Gastrocnemius medialis (tissue), 4 donors: ENCODE measurements at regions of chr2 and their contacts with region 1.

Region 1: DNA sequence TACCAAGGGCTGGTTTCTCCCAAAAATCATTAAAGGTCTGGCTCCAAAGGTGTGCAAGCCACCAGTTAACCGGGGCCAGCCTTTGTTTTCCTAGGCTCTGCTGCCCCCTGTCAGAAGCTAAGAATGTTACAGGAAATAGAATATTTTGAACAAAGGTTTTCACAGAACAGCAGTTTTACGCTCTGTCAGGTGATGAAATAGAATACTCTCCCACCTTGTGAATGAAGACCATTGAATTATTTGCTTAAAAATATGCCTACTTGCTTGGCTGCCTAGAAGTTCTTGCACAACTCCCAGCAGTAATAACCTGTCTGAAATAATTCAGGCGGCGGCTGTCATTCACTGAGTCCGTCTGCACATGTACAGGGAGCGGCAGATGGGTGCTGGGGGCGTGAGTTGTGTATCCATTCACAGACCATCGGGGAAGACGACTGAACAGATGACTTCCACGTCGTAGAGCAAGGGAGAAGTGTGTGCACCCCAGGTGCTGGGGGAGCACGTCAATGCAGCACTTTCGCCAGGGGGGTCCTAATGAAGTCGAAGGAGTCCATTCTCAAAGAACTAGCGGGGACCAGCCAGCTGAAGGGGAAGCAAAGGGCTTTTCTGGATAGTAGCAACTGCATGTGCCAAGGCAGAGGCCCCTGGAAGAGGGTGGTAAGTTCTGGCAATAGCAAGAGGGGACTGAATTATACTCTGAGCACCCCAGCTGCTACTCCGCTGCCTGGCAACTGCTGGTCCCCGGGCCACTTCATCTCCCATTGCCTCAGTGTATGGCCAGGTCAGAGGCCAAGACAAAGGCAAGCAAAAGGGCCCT is 56.1 kb downstream of the SF3B1 start:
- DNase-seq: peak in 1 of 2 donors; percentile 8
- ATAC-seq: peak; percentile 70 to 86
- H3K4me3 ChIP-seq: no peak overlapping the region
- H3K27ac ChIP-seq: no peak overlapping the region
- H3K4me1 ChIP-seq: no peaks in the 10 kb centered on the region
- H3K27me3 ChIP-seq: no peaks in the 10 kb centered on the region
- CTCF ChIP-seq: peak; percentile 72 to 78 (median 76)
- POLR2A ChIP-seq: no peak

Region 2: DNA sequence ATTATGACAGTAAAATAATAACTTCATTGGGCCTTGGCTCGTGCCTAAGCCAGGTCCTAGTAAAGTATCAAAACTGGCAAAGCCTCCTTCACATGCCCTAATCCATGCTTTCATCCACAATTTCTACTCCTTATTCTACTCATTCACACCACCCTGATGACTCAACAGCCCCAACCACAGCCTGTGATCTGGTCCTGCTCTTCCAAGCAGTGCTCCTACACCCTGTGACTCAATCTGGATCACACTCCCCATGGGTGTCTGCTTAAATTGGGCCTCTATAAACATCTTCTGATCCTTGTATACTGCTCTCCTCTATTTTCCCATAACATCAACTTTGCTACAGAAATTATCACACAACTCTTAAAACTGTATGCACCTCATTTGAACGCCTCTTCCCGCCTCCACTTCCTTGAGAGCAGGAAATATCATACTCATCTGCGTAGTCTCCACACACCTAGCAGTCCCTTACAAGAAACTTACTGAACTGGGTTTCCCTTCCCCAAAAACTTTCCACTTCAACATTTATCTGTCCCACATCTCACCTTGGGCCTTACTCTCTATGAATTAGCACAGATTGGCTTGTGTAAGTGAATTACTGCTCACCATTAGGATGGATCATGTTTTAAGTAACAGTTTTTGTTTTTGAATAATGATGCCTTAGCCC is 595.1 kb before region 1 on chr2:
- in situ Hi-C with region 1: no loop called
- intact Hi-C with region 1: no loop called
- DNase-seq: no peak
- ATAC-seq: no peak
- H3K4me3 ChIP-seq: no peak overlapping the region
- H3K27ac ChIP-seq: no peak overlapping the region
- H3K4me1 ChIP-seq: no peaks in the 10 kb centered on the region
- H3K27me3 ChIP-seq: no peaks in the 10 kb centered on the region
- CTCF ChIP-seq: no peak
- POLR2A ChIP-seq: no peak

Region 3: DNA sequence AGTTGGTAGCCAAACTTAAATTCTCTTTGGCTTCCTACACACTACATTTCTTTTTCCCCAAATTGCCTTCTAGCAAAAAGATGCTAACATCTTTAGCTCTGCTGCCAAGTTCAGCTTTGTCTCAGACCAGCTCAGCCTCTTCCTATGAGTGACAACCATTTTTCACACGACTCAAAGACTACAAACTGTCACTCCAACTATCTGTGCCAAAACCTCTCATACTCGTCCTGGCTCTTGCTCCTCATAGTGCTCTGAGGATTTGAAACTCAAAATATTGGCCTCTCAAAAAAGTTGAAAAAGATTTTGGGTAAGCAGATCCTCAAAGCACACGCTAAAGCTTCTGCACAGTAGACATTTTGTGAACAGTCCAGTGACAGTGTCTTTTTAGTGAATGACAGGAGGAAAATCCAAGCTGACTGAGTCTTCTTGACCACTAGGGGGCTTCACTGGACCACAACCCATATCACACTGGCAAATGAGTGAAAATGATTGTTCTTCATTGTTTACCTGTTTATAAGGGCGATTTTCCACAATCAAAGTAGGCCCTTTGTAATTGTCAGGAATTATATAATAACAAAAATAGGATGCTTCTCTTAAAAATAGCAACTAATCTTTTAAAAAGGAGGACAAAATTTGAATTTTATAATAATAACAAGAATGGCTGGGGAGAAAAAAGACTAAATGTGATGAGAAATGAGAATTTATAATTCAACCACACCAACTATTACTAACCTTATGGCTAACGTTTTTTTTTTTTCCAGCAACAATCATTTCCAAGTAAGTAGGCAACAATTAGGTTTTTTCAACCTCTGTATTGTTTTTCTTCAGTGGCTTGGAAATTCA is 366.7 kb before region 1 on chr2:
- in situ Hi-C with region 1: loop called in 2 of 4 experiments (anchors 10 kb)
- intact Hi-C with region 1: loop called (anchors 5 kb)
- DNase-seq: no peak
- ATAC-seq: peak; percentile 56 to 75
- H3K4me3 ChIP-seq: no peak overlapping the region
- H3K27ac ChIP-seq: no peak overlapping the region
- H3K4me1 ChIP-seq: peaks cover 0 to 3% of the 10 kb centered on the region in 2 donors
- H3K27me3 ChIP-seq: no peaks in the 10 kb centered on the region
- CTCF ChIP-seq: peak; percentile 58 to 77 (median 64)
- POLR2A ChIP-seq: no peak

Region 4: DNA sequence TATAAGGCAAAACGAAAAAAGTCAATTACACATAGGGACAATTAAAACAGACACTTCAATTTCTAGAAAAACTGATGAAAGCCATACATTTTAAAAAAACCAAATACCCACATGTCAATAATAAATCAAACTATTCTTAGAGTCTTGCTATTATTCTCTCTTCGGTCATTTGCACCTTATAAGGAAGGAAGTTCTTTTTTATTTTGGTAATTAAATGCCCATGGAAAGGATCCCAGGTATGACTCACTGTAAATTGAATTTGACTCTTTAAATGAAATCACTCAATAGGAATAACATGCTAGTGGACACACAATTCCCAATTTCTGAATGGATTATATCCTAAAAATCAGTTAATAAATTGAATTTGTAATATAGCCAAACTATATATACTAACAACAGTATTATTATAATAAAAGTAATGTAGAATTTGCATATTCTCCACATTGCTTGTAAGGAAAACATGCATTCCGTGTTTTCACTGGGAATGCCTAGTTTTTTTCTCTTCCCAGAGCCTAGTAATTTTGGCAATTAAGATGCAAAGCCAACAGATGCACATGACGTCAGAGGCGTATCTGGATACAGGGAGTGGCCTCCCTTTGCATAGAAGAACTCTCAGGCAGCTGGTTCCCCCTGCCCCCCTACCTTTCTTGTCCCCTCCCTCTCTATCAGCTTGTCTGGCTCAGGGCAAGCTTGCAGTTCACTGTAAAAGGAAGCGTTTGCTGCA is 298.7 kb before region 1 on chr2:
- in situ Hi-C with region 1: no loop called
- intact Hi-C with region 1: no loop called
- DNase-seq: no peak
- ATAC-seq: peak in 1 of 2 donors; percentile 23
- H3K4me3 ChIP-seq: no peak overlapping the region
- H3K27ac ChIP-seq: no peak overlapping the region
- H3K4me1 ChIP-seq: peaks cover 0 to 3% of the 10 kb centered on the region in 2 donors
- H3K27me3 ChIP-seq: no peaks in the 10 kb centered on the region
- CTCF ChIP-seq: no peak
- POLR2A ChIP-seq: no peak

Region 5: DNA sequence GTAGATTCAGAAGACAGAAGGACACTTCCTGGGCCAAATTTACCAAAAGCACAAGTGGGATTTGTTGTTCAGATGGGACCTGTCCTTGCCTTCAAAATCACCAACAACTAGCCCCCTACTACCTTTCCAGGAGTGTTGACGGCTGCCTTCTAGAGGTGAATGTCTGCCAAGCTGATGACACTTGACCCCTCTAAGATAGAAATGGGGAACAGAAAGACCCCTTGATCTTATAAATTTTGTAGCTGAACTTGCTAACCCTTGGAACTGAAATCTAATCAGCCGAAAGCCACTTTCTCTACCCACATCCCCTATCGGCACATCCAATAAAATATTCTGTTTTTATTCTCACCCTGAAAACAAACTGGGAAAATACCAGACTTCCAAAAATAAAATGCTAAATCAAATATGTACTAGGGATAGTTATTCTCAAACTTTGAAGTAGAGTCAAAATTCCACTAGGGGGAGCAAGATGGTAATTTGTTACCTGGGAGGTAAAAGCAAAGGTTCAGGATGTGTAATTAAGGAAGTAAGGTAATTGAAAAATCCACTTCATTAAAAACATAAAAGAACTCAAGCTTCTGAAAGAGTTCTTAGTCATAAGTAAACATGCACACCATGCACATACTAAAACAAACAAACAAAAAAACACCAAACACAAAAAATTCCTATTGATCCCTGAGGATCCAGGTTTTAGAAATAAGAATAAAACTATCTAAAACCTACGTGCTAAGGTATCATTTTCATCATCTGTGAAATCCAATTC is 187.3 kb before region 1 on chr2:
- in situ Hi-C with region 1: loop called (anchors 5 to 10 kb)
- intact Hi-C with region 1: loop called (anchors 1 kb)
- DNase-seq: no peak
- ATAC-seq: peak; percentile 49 to 56
- H3K4me3 ChIP-seq: no peak overlapping the region
- H3K27ac ChIP-seq: no peak overlapping the region
- H3K4me1 ChIP-seq: peaks cover 8 to 12% of the 10 kb centered on the region in 2 donors
- H3K27me3 ChIP-seq: no peaks in the 10 kb centered on the region
- CTCF ChIP-seq: peak; percentile 61 to 82 (median 65)
- POLR2A ChIP-seq: no peak

Region 6: DNA sequence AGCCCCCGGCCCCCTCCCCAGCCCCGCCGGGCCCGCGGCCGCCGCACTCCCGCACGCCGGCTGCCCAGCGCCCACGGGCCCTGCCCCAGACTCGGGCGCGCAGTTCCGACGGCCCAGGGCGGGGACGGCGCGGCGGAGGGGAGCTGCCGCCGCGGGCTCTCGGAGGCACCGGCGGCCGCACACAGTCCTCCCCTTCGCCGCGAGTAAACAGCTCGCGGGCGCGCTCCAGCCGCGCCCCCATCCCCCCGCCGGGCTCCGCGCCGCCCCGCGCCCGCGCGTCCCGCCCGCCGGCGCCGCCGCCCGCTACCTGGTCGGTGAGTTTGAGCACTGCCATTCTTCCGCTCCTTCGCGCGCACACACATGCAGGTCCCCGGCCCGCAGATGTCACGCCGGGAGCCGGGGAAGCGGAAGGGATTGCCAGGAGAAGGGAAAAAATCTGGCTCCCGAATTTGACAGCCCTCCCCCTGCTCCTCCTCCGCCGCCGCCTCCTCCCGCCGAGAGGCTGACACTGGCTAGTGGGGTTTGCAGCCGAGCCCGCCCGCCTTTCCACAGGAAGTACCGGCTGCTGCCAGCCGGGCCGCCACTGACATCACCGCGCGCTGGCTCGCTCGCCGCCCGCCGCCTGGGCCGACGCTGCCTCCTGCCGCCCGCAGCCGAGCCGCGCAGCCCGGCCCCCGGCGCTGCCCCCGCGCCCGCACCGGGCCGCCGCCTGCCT is 68.3 kb before region 1 on chr2 and contains the start of gene ANKRD44:
- in situ Hi-C with region 1: no loop called
- intact Hi-C with region 1: loop called (anchors 5 kb)
- DNase-seq: peak; percentile 82 to 87
- ATAC-seq: peak; percentile 72 to 81
- H3K4me3 ChIP-seq: peak within 1 kb of the TSS; percentile 60 to 85 (median 70)
- H3K27ac ChIP-seq: peak within 1 kb of the TSS; percentile 65 to 80 (median 70)
- H3K4me1 ChIP-seq: peaks cover 23 to 29% of the 10 kb centered on the region in 2 donors
- H3K27me3 ChIP-seq: no peaks in the 10 kb centered on the region
- CTCF ChIP-seq: peak; percentile 44 to 76 (median 57)
- POLR2A ChIP-seq: peak; percentile 79 to 85
- total RNA-seq, gene ANKRD44: 1.8 to 6.3 (median 3.0) TPM

Region 7: DNA sequence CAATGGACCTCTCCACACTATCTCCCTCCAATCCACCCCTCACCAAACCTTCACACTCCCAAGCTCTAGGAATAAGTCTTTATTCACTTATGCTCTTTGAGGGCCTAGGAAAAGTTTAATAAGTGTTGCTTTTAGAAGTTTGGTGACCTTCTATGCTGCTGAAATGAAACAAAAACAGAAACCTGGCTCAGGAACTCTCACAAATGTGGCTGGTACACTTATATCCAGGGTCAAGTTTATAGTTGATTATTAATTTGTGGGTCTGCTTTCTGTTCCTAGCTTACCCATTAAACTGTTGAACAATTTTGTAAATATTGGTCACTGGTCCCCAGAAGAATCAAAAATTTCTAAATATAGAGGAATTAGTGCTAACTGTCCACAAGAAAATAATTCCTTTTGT is 53.9 kb before region 1 on chr2:
- in situ Hi-C with region 1: no loop called
- intact Hi-C with region 1: loop called (anchors 5 kb)
- DNase-seq: no peak
- ATAC-seq: no peak
- H3K4me3 ChIP-seq: no peak overlapping the region
- H3K27ac ChIP-seq: no peak overlapping the region
- H3K4me1 ChIP-seq: no peaks in the 10 kb centered on the region
- H3K27me3 ChIP-seq: no peaks in the 10 kb centered on the region
- CTCF ChIP-seq: no peak
- POLR2A ChIP-seq: no peak